GM12878 (cell line): ENCODE measurements at regions of chr7 and their contacts with region 1.

Region 1: DNA sequence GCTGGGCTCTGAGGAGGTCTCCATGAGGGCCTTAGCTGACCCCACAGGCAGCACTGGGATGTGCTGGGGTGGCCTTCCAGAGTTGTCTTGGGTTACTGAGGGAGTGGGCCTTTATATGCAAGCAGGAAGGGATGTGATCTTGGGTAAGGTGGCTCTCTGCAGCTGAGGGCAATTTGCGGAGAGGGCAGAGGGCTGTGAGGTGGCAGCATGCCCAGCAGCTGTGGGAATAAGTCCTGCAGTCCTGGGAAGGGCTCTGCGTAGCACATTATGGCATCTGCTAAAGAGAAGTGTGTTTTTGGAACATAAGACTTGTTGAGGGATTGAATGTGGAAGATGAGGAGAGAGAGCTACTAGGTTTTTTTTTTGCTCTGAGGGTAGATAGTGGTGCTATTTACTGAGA is 99.6 kb upstream of the KMT2E start:
- DNase-seq: no peak
- ATAC-seq: no peak
- H3K4me3 ChIP-seq: no peak overlapping the region
- H3K27ac ChIP-seq: no peak overlapping the region
- H3K4me1 ChIP-seq: peaks cover 4% of the 10 kb centered on the region; the same call in 1 of the 2 replicates
- H3K27me3 ChIP-seq: no peaks in the 10 kb centered on the region
- CTCF ChIP-seq: no peak
- EP300 ChIP-seq: no peak
- POLR2A ChIP-seq: no peak
- RAD21 ChIP-seq: no peak

Region 2: GRCh38 chr7:104341546-104341945 is 572.9 kb before region 1 on chr7:
- CTCF ChIA-PET with region 1: interaction called, 8 read pairs
- POLR2A ChIA-PET with region 1: no interaction called
- RAD21 ChIA-PET with region 1: interaction called, 6 read pairs
- SMC1A ChIA-PET with region 1: interaction called, 3 read pairs
- in situ Hi-C with region 1: loop called (anchors 10 kb)
- intact Hi-C with region 1: loop called (anchors 5 kb)
- DNase-seq: no peak
- ATAC-seq: peak; percentile 48
- H3K4me3 ChIP-seq: no peak overlapping the region
- H3K27ac ChIP-seq: no peak overlapping the region
- H3K4me1 ChIP-seq: no peaks in the 10 kb centered on the region
- H3K27me3 ChIP-seq: no peaks in the 10 kb centered on the region
- CTCF ChIP-seq: peak; percentile 23 to 30 (median 29); a peak in 4 of 6 replicates
- EP300 ChIP-seq: no peak
- POLR2A ChIP-seq: no peak
- RAD21 ChIP-seq: peak; percentile 42

Region 3: DNA sequence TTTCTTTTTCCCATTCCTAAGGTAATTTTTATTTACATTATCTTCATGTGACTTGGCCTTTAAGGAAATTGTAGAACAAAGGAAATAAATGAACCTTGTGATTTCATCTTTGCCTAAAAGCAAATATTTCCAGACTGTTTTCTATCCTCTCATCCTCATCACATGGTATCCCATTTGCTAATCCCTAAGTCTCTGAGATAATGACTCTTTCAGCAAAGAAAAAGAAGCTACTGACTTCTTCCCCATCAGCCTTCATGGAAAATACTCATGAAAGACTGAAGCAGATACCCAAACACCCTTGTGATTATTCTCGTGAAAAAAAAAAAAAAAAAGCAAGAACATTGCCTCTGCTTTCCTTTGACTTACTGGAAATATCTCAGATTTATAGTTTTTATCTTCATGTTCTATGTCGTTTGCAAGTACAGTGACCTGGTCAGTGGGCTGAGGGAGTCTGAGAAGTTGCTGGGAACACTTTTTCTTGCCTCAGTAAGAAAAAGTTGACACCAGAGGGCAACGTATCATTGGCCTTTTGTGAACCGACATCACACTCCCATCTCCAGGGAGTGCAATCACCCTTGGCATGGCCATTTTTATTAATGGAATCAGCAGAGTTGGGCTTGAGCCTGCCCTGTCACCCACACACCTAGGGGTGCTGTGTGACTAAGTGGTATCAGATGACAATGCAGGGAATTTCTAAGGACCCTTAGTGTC is 146.4 kb before region 1 on chr7:
- CTCF ChIA-PET with region 1: no interaction called
- POLR2A ChIA-PET with region 1: no interaction called
- RAD21 ChIA-PET with region 1: no interaction called
- SMC1A ChIA-PET with region 1: no interaction called
- in situ Hi-C with region 1: no loop called
- intact Hi-C with region 1: loop called (anchors 10 kb)
- DNase-seq: no peak
- ATAC-seq: no peak
- H3K4me3 ChIP-seq: no peak overlapping the region
- H3K27ac ChIP-seq: no peak overlapping the region
- H3K4me1 ChIP-seq: no peaks in the 10 kb centered on the region
- H3K27me3 ChIP-seq: no peaks in the 10 kb centered on the region
- CTCF ChIP-seq: no peak
- EP300 ChIP-seq: no peak
- POLR2A ChIP-seq: no peak
- RAD21 ChIP-seq: no peak

Region 4: GRCh38 chr7:105678811-105679495 is 764.5 kb after region 1 on chr7:
- CTCF ChIA-PET with region 1: no interaction called
- POLR2A ChIA-PET with region 1: no interaction called
- RAD21 ChIA-PET with region 1: no interaction called
- SMC1A ChIA-PET with region 1: no interaction called
- in situ Hi-C with region 1: no loop called
- intact Hi-C with region 1: no loop called
- DNase-seq: no peak
- ATAC-seq: peak; percentile 60
- H3K4me3 ChIP-seq: no peak overlapping the region; the same call in 1 of the 2 replicates
- H3K27ac ChIP-seq: no peak overlapping the region; the same call in 1 of the 2 replicates
- H3K4me1 ChIP-seq: peaks cover 15% of the 10 kb centered on the region
- H3K27me3 ChIP-seq: no peaks in the 10 kb centered on the region
- CTCF ChIP-seq: no peak
- EP300 ChIP-seq: no peak
- POLR2A ChIP-seq: no peak
- RAD21 ChIP-seq: no peak

Region 5: GRCh38 chr7:106176414-106177299 is 1262.2 kb after region 1 on chr7:
- CTCF ChIA-PET with region 1: no interaction called
- POLR2A ChIA-PET with region 1: no interaction called
- RAD21 ChIA-PET with region 1: no interaction called
- SMC1A ChIA-PET with region 1: no interaction called
- in situ Hi-C with region 1: no loop called
- intact Hi-C with region 1: no loop called
- DNase-seq: no peak
- ATAC-seq: peak; percentile 76
- H3K4me3 ChIP-seq: no peak overlapping the region
- H3K27ac ChIP-seq: no peak overlapping the region
- H3K4me1 ChIP-seq: peaks cover 12% of the 10 kb centered on the region
- H3K27me3 ChIP-seq: no peaks in the 10 kb centered on the region
- CTCF ChIP-seq: peak; percentile 95 to 98 (median 96)
- EP300 ChIP-seq: no peak
- POLR2A ChIP-seq: no peak
- RAD21 ChIP-seq: peak; percentile 96